ENCODE measurements at regions of chr16 and their contacts with region 1.

Region 1: GRCh38 chr16:16127469-16128116 is 95.7 kb downstream of the ABCC6 start:
- DNase-seq: peak; percentile 66
- H3K4me3 ChIP-seq: no peak overlapping the region
- H3K27ac ChIP-seq: peak overlapping the region; percentile 24 to 75 (median 59)
- H3K4me1 ChIP-seq: no peaks in the 10 kb centered on the region
- H3K27me3 ChIP-seq: no peaks in the 10 kb centered on the region
- CTCF ChIP-seq: peak; percentile 85 to 98 (median 93)
- EP300 ChIP-seq: no peak
- POLR2A ChIP-seq: no peak

Region 2: GRCh38 chr16:15404792-15405191 is 722.8 kb before region 1 on chr16:
- in situ Hi-C with region 1: loop called in 1 of 4 experiments (anchors 25 kb)
- intact Hi-C with region 1: no loop called
- DNase-seq: peak; percentile 14
- H3K4me3 ChIP-seq: no peak overlapping the region
- H3K27ac ChIP-seq: peak overlapping the region in 1 of 4 donors; percentile 25
- H3K4me1 ChIP-seq: no peaks in the 10 kb centered on the region
- H3K27me3 ChIP-seq: no peaks in the 10 kb centered on the region
- CTCF ChIP-seq: no peak
- EP300 ChIP-seq: no peak
- POLR2A ChIP-seq: no peak

Region 3: DNA sequence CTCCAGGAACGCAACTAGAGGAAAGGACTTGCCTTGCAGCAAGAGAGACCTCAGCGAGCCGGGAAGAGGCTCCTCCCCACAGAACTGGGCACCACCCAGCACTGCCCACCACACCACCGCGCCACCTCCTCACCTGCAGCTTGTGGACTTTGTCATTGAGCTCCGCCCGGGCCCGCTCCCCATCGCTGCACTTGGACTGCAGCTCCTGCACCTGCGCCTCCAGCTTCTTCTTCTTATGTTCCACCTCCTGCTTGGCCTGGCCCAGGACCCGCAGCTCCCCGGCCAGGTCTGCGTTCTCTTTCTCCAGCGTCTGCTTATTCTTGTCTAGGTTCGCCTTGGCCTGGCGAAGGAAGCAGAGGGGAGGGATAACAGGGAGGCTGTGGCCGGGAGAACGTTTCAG is 400.9 kb before region 1 on chr16:
- in situ Hi-C with region 1: no loop called
- intact Hi-C with region 1: no loop called
- DNase-seq: peak; percentile 79
- H3K4me3 ChIP-seq: no peak overlapping the region
- H3K27ac ChIP-seq: peak overlapping the region in 3 of 4 donors; percentile 28 to 48 (median 40)
- H3K4me1 ChIP-seq: peaks cover 0 to 9% (median 2%) of the 10 kb centered on the region in 4 donors
- H3K27me3 ChIP-seq: no peaks in the 10 kb centered on the region
- CTCF ChIP-seq: no peak
- EP300 ChIP-seq: no peak
- POLR2A ChIP-seq: no peak

Region 4: GRCh38 chr16:15765880-15766279 is 361.7 kb before region 1 on chr16:
- in situ Hi-C with region 1: loop called in 3 of 4 experiments (anchors 25 kb)
- intact Hi-C with region 1: loop called (anchors 10 kb)
- DNase-seq: no peak
- H3K4me3 ChIP-seq: no peak overlapping the region
- H3K27ac ChIP-seq: peak overlapping the region in 1 of 4 donors; percentile 52
- H3K4me1 ChIP-seq: no peaks in the 10 kb centered on the region
- H3K27me3 ChIP-seq: no peaks in the 10 kb centered on the region
- CTCF ChIP-seq: peak; percentile 44 to 53 (median 51)
- EP300 ChIP-seq: no peak
- POLR2A ChIP-seq: no peak

Region 5: GRCh38 chr16:15777533-15778203 is 349.9 kb before region 1 on chr16:
- in situ Hi-C with region 1: loop called in 3 of 4 experiments (anchors 25 kb)
- intact Hi-C with region 1: loop called (anchors 10 kb)
- DNase-seq: no peak
- H3K4me3 ChIP-seq: no peak overlapping the region
- H3K27ac ChIP-seq: peak overlapping the region in 3 of 4 donors; percentile 46 to 77 (median 51)
- H3K4me1 ChIP-seq: no peaks in the 10 kb centered on the region
- H3K27me3 ChIP-seq: no peaks in the 10 kb centered on the region
- CTCF ChIP-seq: no peak
- EP300 ChIP-seq: no peak
- POLR2A ChIP-seq: no peak

Region 6: GRCh38 chr16:15857724-15858560 is 269.7 kb before region 1 on chr16:
- in situ Hi-C with region 1: loop called in 2 of 4 experiments (anchors 25 kb)
- intact Hi-C with region 1: loop called (anchors 10 kb)
- DNase-seq: peak; percentile 49
- H3K4me3 ChIP-seq: peak overlapping the region; percentile 32 to 50 (median 38)
- H3K27ac ChIP-seq: peak overlapping the region; percentile 76 to 92 (median 83)
- H3K4me1 ChIP-seq: peaks cover 0 to 21% (median 2%) of the 10 kb centered on the region in 4 donors
- H3K27me3 ChIP-seq: peaks cover 40% of the 10 kb centered on the region
- CTCF ChIP-seq: no peak
- EP300 ChIP-seq: no peak
- POLR2A ChIP-seq: peak; percentile 18

Region 7: DNA sequence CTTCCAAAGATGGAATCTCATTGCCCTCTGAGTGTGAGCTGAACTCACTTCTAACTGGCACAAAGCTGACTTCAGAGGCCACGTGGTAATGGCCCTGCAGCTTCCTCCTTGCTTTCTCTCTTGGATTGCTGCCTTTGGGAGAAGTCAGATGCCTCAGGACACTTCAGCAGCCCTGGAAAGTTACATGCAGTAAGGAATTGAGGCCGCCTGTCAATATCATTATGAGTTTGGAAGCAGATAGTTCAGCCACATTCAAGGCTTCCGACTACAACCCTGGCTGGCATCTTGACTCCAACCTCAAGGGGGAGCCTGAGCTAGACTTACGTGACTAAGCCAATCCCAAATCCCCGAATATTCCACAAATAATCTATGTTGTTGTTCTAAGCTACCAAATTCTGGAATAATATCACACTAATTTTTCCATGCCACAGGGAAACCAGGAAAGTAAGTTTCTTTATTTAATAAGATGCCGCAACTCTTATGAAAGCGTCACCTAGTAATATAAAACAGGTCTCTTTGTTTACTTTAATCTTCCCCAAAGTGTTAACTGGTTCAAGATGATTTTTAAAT is 252.8 kb before region 1 on chr16:
- in situ Hi-C with region 1: loop called (anchors 10 to 25 kb)
- intact Hi-C with region 1: no loop called
- DNase-seq: peak; percentile 53
- H3K4me3 ChIP-seq: no peak overlapping the region
- H3K27ac ChIP-seq: peak overlapping the region in 3 of 4 donors; percentile 32 to 73 (median 53)
- H3K4me1 ChIP-seq: peaks cover 0 to 13% (median 2%) of the 10 kb centered on the region in 4 donors
- H3K27me3 ChIP-seq: no peaks in the 10 kb centered on the region
- CTCF ChIP-seq: peak; percentile 60 to 67 (median 65)
- EP300 ChIP-seq: no peak
- POLR2A ChIP-seq: no peak

Region 8: DNA sequence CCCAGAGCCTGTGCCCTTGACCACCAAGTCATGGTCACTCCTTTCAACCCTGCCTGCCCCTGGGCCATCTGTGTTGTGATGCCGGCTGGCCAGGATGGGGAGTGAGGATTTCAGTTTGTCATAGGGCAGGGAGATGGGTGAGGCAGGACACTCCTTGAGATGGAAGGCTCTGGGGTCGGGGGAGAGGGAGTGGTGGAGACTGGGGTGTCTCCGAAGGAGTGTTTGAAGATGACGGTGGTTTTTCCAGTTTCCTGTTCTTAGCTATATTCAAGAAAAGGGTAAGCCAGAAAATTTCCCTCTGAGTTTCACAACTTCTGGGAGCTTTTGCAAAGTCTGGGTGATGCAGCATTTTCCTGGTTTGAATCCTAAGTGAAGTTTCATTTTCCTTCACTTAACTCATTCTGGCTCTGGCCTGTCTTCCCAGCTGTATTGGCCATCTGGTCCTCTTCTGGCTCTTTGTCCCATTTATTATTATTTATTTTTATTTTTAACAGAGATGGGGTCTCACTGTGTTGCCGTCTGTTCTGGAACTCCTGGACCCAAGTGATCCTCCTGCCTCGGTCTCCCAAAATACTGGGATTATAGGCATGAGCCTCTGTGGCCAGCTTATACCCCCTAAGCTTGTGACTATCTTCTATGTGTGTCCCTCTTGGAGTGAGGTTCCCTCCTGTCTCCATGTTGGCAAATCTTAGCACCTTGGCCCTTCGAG is 150.5 kb before region 1 on chr16:
- in situ Hi-C with region 1: no loop called
- intact Hi-C with region 1: no loop called
- DNase-seq: no peak
- H3K4me3 ChIP-seq: no peak overlapping the region
- H3K27ac ChIP-seq: peak overlapping the region; percentile 44 to 78 (median 56)
- H3K4me1 ChIP-seq: peaks cover 0 to 38% (median 17%) of the 10 kb centered on the region in 4 donors
- H3K27me3 ChIP-seq: no peaks in the 10 kb centered on the region
- CTCF ChIP-seq: no peak
- EP300 ChIP-seq: no peak
- POLR2A ChIP-seq: no peak

Region 9: GRCh38 chr16:16042076-16042475 is 85.5 kb before region 1 on chr16:
- in situ Hi-C with region 1: no loop called
- intact Hi-C with region 1: no loop called
- DNase-seq: no peak
- H3K4me3 ChIP-seq: no peak overlapping the region
- H3K27ac ChIP-seq: no peak overlapping the region
- H3K4me1 ChIP-seq: no peaks in the 10 kb centered on the region
- H3K27me3 ChIP-seq: no peaks in the 10 kb centered on the region
- CTCF ChIP-seq: no peak
- EP300 ChIP-seq: no peak
- POLR2A ChIP-seq: no peak

Region 10: GRCh38 chr16:16062023-16062932 is 65.3 kb before region 1 on chr16:
- in situ Hi-C with region 1: no loop called
- intact Hi-C with region 1: loop called (anchors 5 kb)
- DNase-seq: peak; percentile 19
- H3K4me3 ChIP-seq: no peak overlapping the region
- H3K27ac ChIP-seq: peak overlapping the region; percentile 62 to 82 (median 72)
- H3K4me1 ChIP-seq: peaks cover 0 to 13% (median 9%) of the 10 kb centered on the region in 4 donors
- H3K27me3 ChIP-seq: no peaks in the 10 kb centered on the region
- CTCF ChIP-seq: no peak
- EP300 ChIP-seq: peak; percentile 66
- POLR2A ChIP-seq: no peak

Region 11: DNA sequence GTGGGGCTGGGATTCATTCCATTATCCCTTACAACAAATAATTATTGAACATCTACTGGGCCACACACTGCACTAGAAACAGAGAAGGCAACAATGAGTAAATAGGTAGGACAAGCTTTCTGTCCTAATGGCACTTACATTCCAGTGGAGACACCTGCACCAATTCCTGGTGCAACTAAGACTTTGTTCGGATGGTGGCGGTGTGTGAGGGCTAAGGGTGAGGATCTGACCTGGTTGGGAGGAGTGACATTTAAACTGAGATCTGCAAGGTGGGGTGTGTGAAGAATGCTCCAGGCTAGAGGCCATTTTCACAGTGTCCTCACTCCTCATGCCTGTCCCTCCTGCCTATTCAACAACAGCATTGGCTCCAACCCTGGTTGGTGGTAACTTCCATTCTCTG is 833.2 kb after region 1 on chr16:
- in situ Hi-C with region 1: no loop called
- intact Hi-C with region 1: no loop called
- DNase-seq: no peak
- H3K4me3 ChIP-seq: no peak overlapping the region
- H3K27ac ChIP-seq: no peak overlapping the region
- H3K4me1 ChIP-seq: no peaks in the 10 kb centered on the region
- H3K27me3 ChIP-seq: no peaks in the 10 kb centered on the region
- CTCF ChIP-seq: no peak
- EP300 ChIP-seq: no peak
- POLR2A ChIP-seq: no peak